Heart left ventricle (tissue), 16 donors: ENCODE measurements at regions of chr7 and their contacts with region 1.

Region 1: GRCh38 chr7:135121868-135122267 is 26.0 kb upstream of the TMEM140 start:
- DNase-seq: peak in 3 of 5 donors; percentile 16 to 73 (median 73)
- ATAC-seq: peak in 2 of 4 donors; percentile 34 to 92
- H3K4me3 ChIP-seq: no peak overlapping the region
- H3K27ac ChIP-seq: no peak overlapping the region
- H3K4me1 ChIP-seq: no peaks in the 10 kb centered on the region
- H3K27me3 ChIP-seq: no peaks in the 10 kb centered on the region
- CTCF ChIP-seq: no peak
- POLR2A ChIP-seq: no peak

Region 2: GRCh38 chr7:135023622-135024021 is 98.2 kb before region 1 on chr7:
- intact Hi-C with region 1: loop called in 1 of 10 experiments (anchors 10 kb)
- DNase-seq: no peak
- ATAC-seq: no peak
- H3K4me3 ChIP-seq: no peak overlapping the region
- H3K27ac ChIP-seq: no peak overlapping the region
- H3K4me1 ChIP-seq: no peaks in the 10 kb centered on the region
- H3K27me3 ChIP-seq: no peaks in the 10 kb centered on the region
- CTCF ChIP-seq: no peak
- POLR2A ChIP-seq: no peak